Naive thymus-derived CD4-positive, alpha-beta T cell (primary cell): ENCODE measurements at regions of chr1 and their contacts with region 1.

Region 1: DNA sequence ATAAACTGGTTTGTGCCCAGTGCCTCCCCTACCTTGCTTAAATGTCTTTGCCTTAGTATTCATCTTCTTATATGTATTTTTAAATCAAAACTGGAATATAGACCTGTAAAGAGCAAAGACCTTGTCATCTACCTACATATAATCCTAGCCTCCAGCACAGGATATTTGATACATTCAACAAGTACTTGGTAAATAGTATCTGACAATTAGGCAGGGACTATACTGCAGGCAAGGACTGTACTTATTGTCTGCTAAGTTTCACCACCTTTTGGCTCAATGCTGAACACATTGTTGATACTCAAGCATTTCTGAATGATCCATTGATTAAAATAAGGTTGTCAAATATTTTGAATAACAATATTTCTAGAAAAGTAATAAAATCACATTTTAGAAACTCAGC is 96.4 kb downstream of the PKN2 start:
- DNase-seq: no peak
- ATAC-seq: no peak
- H3K4me3 ChIP-seq: no peak overlapping the region
- H3K4me3 Mint-ChIP-seq: no peak overlapping the region
- H3K27ac ChIP-seq: no peak overlapping the region
- H3K27ac Mint-ChIP-seq: no peak overlapping the region
- H3K4me1 ChIP-seq: no peaks in the 10 kb centered on the region
- H3K4me1 Mint-ChIP-seq: peaks cover 0 to 5% (median 0%) of the 10 kb centered on the region in 7 donors
- H3K27me3 ChIP-seq: no peaks in the 10 kb centered on the region
- H3K27me3 Mint-ChIP-seq: no peaks in the 10 kb centered on the region

Region 2: DNA sequence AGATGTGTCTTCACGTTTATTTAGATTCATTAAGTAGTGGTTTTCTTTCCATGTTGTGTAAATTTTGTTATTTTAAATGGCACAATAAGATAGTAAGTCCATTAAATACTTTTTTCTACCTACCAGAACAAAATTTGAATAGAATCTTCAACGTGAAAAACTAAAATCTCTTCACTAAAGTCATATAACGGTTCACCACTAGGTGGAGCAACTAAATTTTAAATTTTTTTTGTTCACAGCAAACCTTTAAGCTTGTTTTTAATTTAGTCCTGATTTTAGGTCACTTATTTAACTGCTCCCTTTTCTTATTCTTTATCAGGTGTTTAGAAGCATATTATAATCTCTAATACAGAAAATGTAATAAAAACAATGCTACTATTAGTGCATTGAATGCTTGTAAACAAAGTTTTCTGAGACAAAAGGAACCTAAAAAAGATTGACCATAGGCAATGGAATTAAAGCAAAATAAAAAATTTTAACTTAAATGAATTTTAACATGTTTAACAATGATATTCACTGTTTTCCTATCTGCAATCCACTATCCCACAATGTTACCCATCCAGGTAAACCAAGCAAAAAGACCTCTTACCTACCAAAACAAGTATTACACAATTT is 124.7 kb before region 1 on chr1:
- CTCF ChIA-PET with region 1: no interaction called
- POLR2A ChIA-PET with region 1: no interaction called
- intact Hi-C with region 1: loop called in 1 of 2 experiments (anchors 5 kb)
- DNase-seq: peak in 6 of 9 donors; percentile 5 to 49 (median 38)
- ATAC-seq: peak; percentile 34
- H3K4me3 ChIP-seq: no peak overlapping the region
- H3K4me3 Mint-ChIP-seq: no peak overlapping the region
- H3K27ac ChIP-seq: no peak overlapping the region
- H3K27ac Mint-ChIP-seq: no peak overlapping the region
- H3K4me1 ChIP-seq: no peaks in the 10 kb centered on the region
- H3K4me1 Mint-ChIP-seq: peaks cover 2 to 20% (median 16%) of the 10 kb centered on the region in 7 donors
- H3K27me3 ChIP-seq: no peaks in the 10 kb centered on the region
- H3K27me3 Mint-ChIP-seq: peaks cover 0 to 3% (median 0%) of the 10 kb centered on the region in 5 donors

Region 3: DNA sequence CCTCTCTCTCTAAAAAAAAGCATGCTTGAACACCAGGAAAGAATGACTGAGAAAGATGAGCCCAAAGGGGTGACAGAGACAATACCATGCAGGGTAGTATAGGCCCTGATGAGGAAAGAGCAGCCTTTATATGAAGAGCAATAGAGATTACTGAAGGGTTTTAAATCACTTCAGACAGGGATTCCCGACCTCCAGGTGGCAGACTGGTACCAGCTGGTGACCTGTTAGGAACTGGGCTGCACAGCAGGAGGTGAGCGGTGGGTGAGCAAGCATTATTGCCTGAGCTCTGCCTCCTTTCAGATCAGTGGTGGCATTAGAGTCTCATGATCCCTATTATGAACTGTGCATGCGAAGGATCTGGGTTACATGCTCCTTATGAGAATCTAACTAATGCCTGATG is 141.7 kb after region 1 on chr1:
- CTCF ChIA-PET with region 1: no interaction called
- POLR2A ChIA-PET with region 1: no interaction called
- intact Hi-C with region 1: no loop called
- DNase-seq: no peak
- ATAC-seq: no peak
- H3K4me3 ChIP-seq: no peak overlapping the region
- H3K4me3 Mint-ChIP-seq: peak overlapping the region in 2 of 10 donors; percentile 2 to 23
- H3K27ac ChIP-seq: no peak overlapping the region
- H3K27ac Mint-ChIP-seq: peak overlapping the region in 1 of 9 donors; percentile 79
- H3K4me1 ChIP-seq: no peaks in the 10 kb centered on the region
- H3K4me1 Mint-ChIP-seq: peaks cover 0 to under 1% (median 0%) of the 10 kb centered on the region in 7 donors
- H3K27me3 ChIP-seq: no peaks in the 10 kb centered on the region
- H3K27me3 Mint-ChIP-seq: no peaks in the 10 kb centered on the region